ENCODE measurements at regions of chr11 and their contacts with region 1.

Region 1: DNA sequence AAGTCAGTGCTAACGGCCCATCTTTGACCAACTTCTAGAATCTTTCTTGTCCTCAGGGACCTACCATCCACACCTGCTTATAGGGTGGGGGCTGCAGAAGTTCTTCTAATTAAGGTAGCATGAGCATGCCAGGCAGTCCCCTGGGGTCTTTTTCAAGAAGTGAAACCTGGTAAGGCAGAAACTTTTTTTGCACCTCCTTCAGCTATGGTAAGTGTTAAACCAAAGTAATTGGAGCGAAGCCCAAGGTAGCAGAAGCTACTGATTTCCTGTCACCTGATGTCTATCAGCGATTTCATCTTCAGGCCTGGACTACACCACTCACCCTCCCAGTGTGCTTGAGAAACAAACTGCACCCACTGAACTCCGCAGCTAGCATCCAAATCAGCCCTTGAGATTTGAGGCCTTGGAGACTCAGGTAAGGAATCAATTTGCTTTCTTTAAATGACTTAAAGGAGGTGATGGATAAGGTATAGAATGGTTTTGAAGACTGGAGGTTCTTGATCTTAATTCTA is at the start of gene MS4A1:
- DNase-seq: peak; percentile 95
- ATAC-seq: peak; percentile 83
- H3K4me3 ChIP-seq: peak within 1 kb of the TSS; percentile 63 to 96 (median 74)
- H3K4me3 Mint-ChIP-seq: peak within 1 kb of the TSS; percentile 90
- H3K27ac ChIP-seq: peak within 1 kb of the TSS; percentile 93 to 98
- H3K27ac Mint-ChIP-seq: peak within 1 kb of the TSS; percentile 99
- H3K4me1 ChIP-seq: peaks cover 44% of the 10 kb centered on the region in 2 donors
- H3K4me1 Mint-ChIP-seq: peaks cover 65% of the 10 kb centered on the region
- H3K27me3 ChIP-seq: no peaks in the 10 kb centered on the region
- H3K27me3 Mint-ChIP-seq: no peaks in the 10 kb centered on the region
- CTCF ChIP-seq: no peak
- total RNA-seq, gene MS4A1: 1,202 and 1,215 TPM in 2 replicates

Region 2: GRCh38 chr11:60378354-60378753 is 77.2 kb before region 1 on chr11 and contains the start of gene MS4A7:
- CTCF ChIA-PET with region 1: interaction called, 257 read pairs
- POLR2A ChIA-PET with region 1: interaction called, 12 read pairs
- intact Hi-C with region 1: loop called (anchors 1 kb)
- DNase-seq: peak; percentile 87
- ATAC-seq: peak; percentile 81
- H3K4me3 ChIP-seq: peak within 1 kb of the TSS; percentile 12 to 58 (median 32)
- H3K4me3 Mint-ChIP-seq: peak within 1 kb of the TSS; percentile 85
- H3K27ac ChIP-seq: peak within 1 kb of the TSS; percentile 93 to 99
- H3K27ac Mint-ChIP-seq: peak within 1 kb of the TSS; percentile 95
- H3K4me1 ChIP-seq: peaks cover 67 to 73% of the 10 kb centered on the region in 2 donors
- H3K4me1 Mint-ChIP-seq: peaks cover 73% of the 10 kb centered on the region
- H3K27me3 ChIP-seq: no peaks in the 10 kb centered on the region
- H3K27me3 Mint-ChIP-seq: no peaks in the 10 kb centered on the region
- CTCF ChIP-seq: no peak
- total RNA-seq, gene MS4A7: 27.2 and 29.1 TPM in 2 replicates

Region 3: GRCh38 chr11:60396799-60397198 is 58.8 kb before region 1 on chr11:
- CTCF ChIA-PET with region 1: interaction called, 18 read pairs
- POLR2A ChIA-PET with region 1: interaction called, 11 read pairs
- intact Hi-C with region 1: loop called (anchors 1 kb)
- DNase-seq: peak; percentile 80
- ATAC-seq: peak; percentile 92
- H3K4me3 ChIP-seq: peak overlapping the region in 3 of 5 experiments; percentile 7 to 23 (median 16)
- H3K4me3 Mint-ChIP-seq: peak overlapping the region; percentile 70
- H3K27ac ChIP-seq: peak overlapping the region; percentile 74 to 79
- H3K27ac Mint-ChIP-seq: peak overlapping the region; percentile 86
- H3K4me1 ChIP-seq: peaks cover 32 to 41% of the 10 kb centered on the region in 2 donors
- H3K4me1 Mint-ChIP-seq: peaks cover 69% of the 10 kb centered on the region
- H3K27me3 ChIP-seq: no peaks in the 10 kb centered on the region
- H3K27me3 Mint-ChIP-seq: no peaks in the 10 kb centered on the region
- CTCF ChIP-seq: no peak

Region 4: GRCh38 chr11:60477035-60477445 is 21.5 kb after region 1 on chr11:
- CTCF ChIA-PET with region 1: interaction called, 53 read pairs
- POLR2A ChIA-PET with region 1: interaction called, 41 read pairs
- intact Hi-C with region 1: loop called (anchors 1 kb)
- DNase-seq: peak; percentile 92
- ATAC-seq: peak; percentile 95
- H3K4me3 ChIP-seq: peak overlapping the region in 1 of 5 experiments; percentile 16
- H3K4me3 Mint-ChIP-seq: peak overlapping the region; percentile 69
- H3K27ac ChIP-seq: peak overlapping the region; percentile 78 to 88
- H3K27ac Mint-ChIP-seq: peak overlapping the region; percentile 78
- H3K4me1 ChIP-seq: peaks cover 43 to 55% of the 10 kb centered on the region in 2 donors
- H3K4me1 Mint-ChIP-seq: peaks cover 66% of the 10 kb centered on the region
- H3K27me3 ChIP-seq: no peaks in the 10 kb centered on the region
- H3K27me3 Mint-ChIP-seq: no peaks in the 10 kb centered on the region
- CTCF ChIP-seq: no peak

Region 5: GRCh38 chr11:61091373-61092279 is 636.0 kb after region 1 on chr11:
- CTCF ChIA-PET with region 1: no interaction called
- POLR2A ChIA-PET with region 1: interaction called, 3 read pairs
- intact Hi-C with region 1: loop called (anchors 10 kb)
- DNase-seq: peak; percentile 11
- ATAC-seq: peak; percentile 11
- H3K4me3 ChIP-seq: no peak overlapping the region
- H3K4me3 Mint-ChIP-seq: peak overlapping the region; percentile 65
- H3K27ac ChIP-seq: peak overlapping the region; percentile 26 to 69
- H3K27ac Mint-ChIP-seq: peak overlapping the region; percentile 95
- H3K4me1 ChIP-seq: peaks cover 47 to 56% of the 10 kb centered on the region in 2 donors
- H3K4me1 Mint-ChIP-seq: peaks cover 72% of the 10 kb centered on the region
- H3K27me3 ChIP-seq: no peaks in the 10 kb centered on the region
- H3K27me3 Mint-ChIP-seq: no peaks in the 10 kb centered on the region
- CTCF ChIP-seq: no peak

Measured in B cell (primary cell).